ENCODE measurements at regions of chr1 and their contacts with region 1.

Region 1: GRCh38 chr1:205977402-205978014 is 25.7 kb downstream of the RAB7B start:
- DNase-seq: peak; percentile 69 to 86 (median 77)
- ATAC-seq: peak; percentile 65 to 82 (median 80)
- H3K4me3 ChIP-seq: no peak overlapping the region
- H3K27ac ChIP-seq: peak overlapping the region; percentile 28 to 89 (median 79)
- H3K4me1 ChIP-seq: peaks cover 0 to 25% (median 16%) of the 10 kb centered on the region in 12 donors
- H3K27me3 ChIP-seq: no peaks in the 10 kb centered on the region
- CTCF ChIP-seq: peak; percentile 91 to 99 (median 96)
- POLR2A ChIP-seq: no peak

Region 2: GRCh38 chr1:205658943-205659581 is 318.4 kb before region 1 on chr1:
- intact Hi-C with region 1: loop called in 7 of 10 experiments (anchors 1 to 5 kb)
- DNase-seq: peak; percentile 78 to 90 (median 83)
- ATAC-seq: peak; percentile 71 to 88 (median 80)
- H3K4me3 ChIP-seq: no peak overlapping the region
- H3K27ac ChIP-seq: no peak overlapping the region
- H3K4me1 ChIP-seq: peaks cover 0 to 16% (median 6%) of the 10 kb centered on the region in 12 donors
- H3K27me3 ChIP-seq: no peaks in the 10 kb centered on the region
- CTCF ChIP-seq: peak; percentile 77 to 91 (median 85)
- POLR2A ChIP-seq: no peak

Region 3: DNA sequence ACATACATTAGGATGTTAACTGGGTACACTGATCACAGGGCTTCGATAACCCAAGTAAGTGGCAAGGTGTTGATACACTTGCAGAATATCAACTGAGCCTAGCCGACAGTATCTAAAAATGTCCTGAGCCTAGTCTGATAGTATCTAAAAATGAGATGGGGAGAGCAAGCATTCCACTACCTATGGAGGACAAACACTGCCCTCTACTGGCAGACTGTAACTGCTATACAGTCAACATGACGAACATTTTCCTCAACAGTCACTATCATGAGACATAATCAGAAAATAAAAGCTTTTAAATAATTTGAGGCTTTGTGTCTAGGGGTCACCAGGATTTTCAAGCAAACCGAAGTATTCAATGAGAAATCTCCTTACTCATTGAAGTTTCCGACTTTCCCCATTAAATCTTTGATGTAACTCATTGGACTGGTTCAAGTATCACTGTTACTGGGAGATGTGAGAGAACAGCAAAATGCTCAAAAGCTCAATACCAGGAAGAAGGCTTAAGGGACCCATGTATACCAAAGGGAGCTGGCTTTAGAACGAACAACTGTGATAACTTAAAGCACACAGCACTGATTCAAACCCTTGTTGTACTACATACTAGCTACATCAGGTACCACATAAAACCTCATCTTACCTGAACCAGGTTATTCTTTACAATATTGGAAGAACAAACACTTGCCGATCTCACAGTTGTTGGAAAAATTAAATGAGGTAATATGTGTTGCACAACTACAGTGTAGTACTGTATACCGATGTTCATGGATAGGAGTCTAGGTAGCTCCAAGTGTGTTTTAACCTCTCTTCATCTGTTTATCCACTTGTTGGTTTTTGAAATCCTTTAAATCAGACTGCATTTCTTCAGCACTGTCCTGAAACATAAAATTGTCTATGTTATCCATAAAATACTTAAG is 266.1 kb before region 1 on chr1:
- intact Hi-C with region 1: loop called in 1 of 10 experiments (anchors 1 kb)
- DNase-seq: peak in 4 of 5 donors; percentile 40 to 70 (median 62)
- ATAC-seq: peak; percentile 43 to 83 (median 80)
- H3K4me3 ChIP-seq: no peak overlapping the region
- H3K27ac ChIP-seq: no peak overlapping the region
- H3K4me1 ChIP-seq: peaks cover 0 to 28% (median 10%) of the 10 kb centered on the region in 12 donors
- H3K27me3 ChIP-seq: no peaks in the 10 kb centered on the region
- CTCF ChIP-seq: peak; percentile 77 to 95 (median 88)
- POLR2A ChIP-seq: no peak

Region 4: DNA sequence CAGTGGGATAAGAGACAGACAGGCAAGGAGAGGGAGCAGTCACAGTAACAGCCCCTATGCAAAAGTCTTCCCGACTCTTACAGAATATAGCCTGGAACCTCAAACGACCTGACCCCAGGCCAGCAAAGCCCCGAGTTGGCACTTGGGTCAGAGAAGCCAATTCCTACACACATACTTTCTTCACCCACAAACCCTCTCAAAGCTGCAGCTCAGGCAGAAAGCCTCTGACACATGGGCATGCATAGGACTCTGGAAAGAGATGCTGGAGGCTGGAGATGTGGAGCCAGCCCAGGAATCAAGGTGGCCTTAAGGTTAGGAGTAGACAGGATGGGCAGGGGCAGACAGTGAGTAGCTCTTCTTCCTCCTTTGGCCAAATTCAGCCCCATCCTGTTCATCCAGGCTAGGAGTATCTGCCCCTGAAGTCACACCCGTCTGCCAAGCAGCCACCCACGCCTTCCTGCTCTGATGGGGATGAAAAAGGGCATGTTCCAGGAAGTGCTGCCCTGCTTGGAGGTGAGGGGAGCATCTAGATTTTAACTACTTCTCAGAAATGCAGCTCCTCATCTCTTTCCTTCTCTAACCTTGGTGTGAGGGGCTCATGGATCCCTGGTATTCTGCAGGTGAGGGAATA is 172.3 kb before region 1 on chr1:
- intact Hi-C with region 1: loop called in 2 of 10 experiments (anchors 5 kb)
- DNase-seq: no peak
- ATAC-seq: no peak
- H3K4me3 ChIP-seq: peak overlapping the region in 8 of 12 donors; percentile 3 to 94 (median 19)
- H3K27ac ChIP-seq: peak overlapping the region in 2 of 12 donors; percentile 29 to 44
- H3K4me1 ChIP-seq: peaks cover 0 to 92% (median 53%) of the 10 kb centered on the region in 12 donors
- H3K27me3 ChIP-seq: no peaks in the 10 kb centered on the region
- CTCF ChIP-seq: no peak
- POLR2A ChIP-seq: no peak

Region 5: DNA sequence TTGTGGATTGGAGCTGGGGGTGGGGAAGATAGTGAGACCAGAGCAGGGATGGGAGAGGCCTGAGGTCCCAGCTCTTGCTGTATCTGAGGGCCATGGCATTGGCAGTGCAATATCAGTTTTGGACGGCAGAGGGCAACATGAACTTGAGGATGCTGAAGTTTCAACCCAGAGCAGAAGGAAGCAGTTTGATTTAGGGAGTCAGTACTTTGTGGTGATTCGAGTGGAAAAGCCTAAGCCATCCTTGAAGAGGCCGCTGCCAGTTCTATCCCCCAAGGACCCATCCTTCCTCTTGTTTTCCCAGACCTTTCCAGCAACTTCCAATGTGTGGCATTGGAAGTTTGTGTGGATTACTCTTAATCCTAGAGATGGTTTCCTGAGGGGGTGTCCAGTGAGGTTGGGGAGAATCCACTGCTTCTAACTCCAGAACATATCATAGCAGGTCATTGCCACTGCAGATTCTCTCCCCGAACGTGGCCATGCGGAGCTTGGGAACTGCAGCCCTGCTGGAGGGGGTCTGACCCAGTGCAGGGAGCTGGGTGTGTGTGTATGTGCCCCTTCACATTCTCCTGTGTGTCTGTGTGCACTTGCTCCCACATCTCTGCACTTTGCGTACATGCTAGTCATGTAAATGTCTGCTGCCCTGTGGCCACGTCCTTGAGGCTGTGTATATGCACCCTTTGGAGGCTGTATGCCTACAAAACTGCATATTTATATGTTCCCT is 58.3 kb before region 1 on chr1:
- intact Hi-C with region 1: loop called (anchors 1 to 2 kb)
- DNase-seq: peak in 4 of 5 donors; percentile 82 to 86 (median 84)
- ATAC-seq: peak; percentile 47 to 73 (median 56)
- H3K4me3 ChIP-seq: peak overlapping the region in 6 of 12 donors; percentile 0 to 44 (median 36)
- H3K27ac ChIP-seq: peak overlapping the region; percentile 68 to 94 (median 86)
- H3K4me1 ChIP-seq: peaks cover 0 to 66% (median 32%) of the 10 kb centered on the region in 12 donors
- H3K27me3 ChIP-seq: no peaks in the 10 kb centered on the region
- CTCF ChIP-seq: peak; percentile 79 to 96 (median 89)
- POLR2A ChIP-seq: no peak

Measured in heart left ventricle (tissue), 16 donors.